Activated naive CD4-positive, alpha-beta T cell treated with anti-CD3 and anti-CD28 coated beads for 36 hours (primary cell): ENCODE measurements at regions of chr15 and their contacts with region 1.

Region 1: GRCh38 chr15:65286704-65287519 is at the start of gene PARP16:
- DNase-seq: peak; percentile 92
- H3K4me3 Mint-ChIP-seq: peak within 1 kb of the TSS; percentile 83
- H3K27ac Mint-ChIP-seq: peak within 1 kb of the TSS; percentile 82
- H3K4me1 Mint-ChIP-seq: peaks cover 32% of the 10 kb centered on the region
- H3K27me3 Mint-ChIP-seq: no peaks in the 10 kb centered on the region
- total RNA-seq, gene PARP16: 16.2 to 16.8 TPM

Region 2: GRCh38 chr15:65249641-65250040 is 37.3 kb before region 1 on chr15:
- CTCF ChIA-PET with region 1: interaction called, 5 read pairs
- intact Hi-C with region 1: loop called (anchors 1 kb)
- DNase-seq: peak; percentile 96
- H3K4me3 Mint-ChIP-seq: peak overlapping the region; percentile 4
- H3K27ac Mint-ChIP-seq: peak overlapping the region; percentile 78
- H3K4me1 Mint-ChIP-seq: peaks cover 24% of the 10 kb centered on the region
- H3K27me3 Mint-ChIP-seq: no peaks in the 10 kb centered on the region

Region 3: GRCh38 chr15:65268411-65268810 is 18.5 kb before region 1 on chr15:
- CTCF ChIA-PET with region 1: interaction called, 27 read pairs
- intact Hi-C with region 1: no loop called
- DNase-seq: no peak
- H3K4me3 Mint-ChIP-seq: no peak overlapping the region
- H3K27ac Mint-ChIP-seq: no peak overlapping the region
- H3K4me1 Mint-ChIP-seq: no peaks in the 10 kb centered on the region
- H3K27me3 Mint-ChIP-seq: no peaks in the 10 kb centered on the region

Region 4: DNA sequence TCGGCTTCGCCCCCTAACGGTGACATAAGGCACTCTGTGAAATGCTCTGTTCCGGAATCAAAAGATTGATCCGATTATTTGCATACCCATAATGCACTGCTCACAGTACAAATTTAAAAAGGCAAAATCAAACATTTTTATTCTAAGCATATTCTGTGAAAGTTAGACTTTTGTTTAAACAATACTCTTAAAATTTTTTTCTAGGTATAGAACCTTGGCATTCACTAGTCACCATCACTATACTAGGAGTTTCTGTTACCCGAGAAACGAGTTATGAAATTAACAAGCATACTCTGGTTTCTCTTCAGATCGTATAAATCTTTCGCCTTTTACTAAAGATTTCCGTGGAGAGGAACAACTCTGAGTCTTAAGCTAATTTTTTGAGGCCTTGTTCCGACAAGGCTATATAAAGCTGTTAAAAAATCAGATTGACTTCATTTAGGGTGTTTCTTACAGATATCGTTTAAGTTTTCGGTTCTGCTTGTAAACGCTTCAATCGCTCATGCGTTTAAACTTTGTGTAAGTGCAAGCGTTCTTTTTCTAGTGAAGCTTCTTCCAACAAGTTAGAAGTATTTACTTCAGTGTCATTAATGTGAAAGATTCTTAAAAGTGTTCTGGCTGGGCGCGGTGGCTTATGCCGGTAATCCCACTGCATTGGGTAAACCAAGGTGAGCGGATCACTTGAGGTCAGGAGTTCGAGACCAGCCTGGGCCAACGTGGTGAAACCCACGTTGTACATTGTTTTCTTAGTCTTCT is 17.7 kb after region 1 on chr15 and contains the start of gene RNU5B-1:
- CTCF ChIA-PET with region 1: interaction called, 4 read pairs
- intact Hi-C with region 1: loop called (anchors 1 kb)
- DNase-seq: peak; percentile 86
- H3K4me3 Mint-ChIP-seq: peak within 1 kb of the TSS; percentile 89
- H3K27ac Mint-ChIP-seq: peak within 1 kb of the TSS; percentile 97
- H3K4me1 Mint-ChIP-seq: peaks cover 24% of the 10 kb centered on the region
- H3K27me3 Mint-ChIP-seq: peaks cover 4% of the 10 kb centered on the region
- total RNA-seq, gene RNU5B-1: not detected

Region 5: DNA sequence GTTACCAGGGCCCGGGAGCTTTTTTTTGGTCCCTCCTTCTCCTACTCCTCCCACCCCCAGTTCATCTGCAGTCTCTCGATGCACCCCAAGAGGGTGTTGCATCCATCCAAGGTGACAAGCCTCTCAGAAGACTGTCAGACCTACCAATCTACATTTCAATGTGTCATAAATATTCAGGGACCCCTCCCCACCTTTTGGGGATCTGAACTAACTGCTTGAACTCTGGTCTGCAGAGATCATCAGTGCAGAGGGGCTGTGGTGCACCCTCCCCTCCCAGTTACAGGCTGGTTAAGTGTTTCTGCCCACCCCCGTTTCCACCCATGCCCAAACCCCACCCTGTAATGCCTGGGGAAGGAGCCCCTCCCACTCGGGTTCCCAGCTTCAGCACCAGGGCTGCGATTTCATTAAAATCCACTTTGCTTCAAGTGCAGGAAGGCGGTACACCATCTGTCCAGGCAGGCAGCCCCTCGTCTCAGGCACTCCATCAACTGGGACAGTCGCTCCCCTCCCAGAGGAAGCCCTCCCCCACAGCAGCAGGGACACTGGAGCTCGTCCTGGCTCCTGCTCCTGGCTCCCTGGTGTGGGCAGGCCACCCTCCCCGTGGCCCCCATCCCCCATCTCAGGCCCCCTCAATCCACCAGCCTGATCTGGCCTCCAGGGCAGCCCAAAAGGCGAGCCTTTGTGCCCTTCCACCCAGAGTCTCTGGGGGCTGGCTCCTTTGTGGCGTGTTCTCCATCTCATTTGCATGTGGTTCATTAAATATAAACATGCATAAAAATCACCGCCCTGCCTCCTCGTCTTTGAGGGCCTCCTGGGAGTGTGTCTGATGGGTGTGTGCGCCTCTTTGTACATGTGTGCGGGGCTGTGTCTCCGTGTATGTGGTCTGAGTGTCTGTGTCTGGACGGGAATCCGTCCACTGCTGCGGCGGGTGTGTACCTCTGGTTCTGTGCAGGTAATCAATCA is 49.9 kb after region 1 on chr15:
- CTCF ChIA-PET with region 1: no interaction called
- intact Hi-C with region 1: no loop called
- DNase-seq: no peak
- H3K4me3 Mint-ChIP-seq: no peak overlapping the region
- H3K27ac Mint-ChIP-seq: no peak overlapping the region
- H3K4me1 Mint-ChIP-seq: no peaks in the 10 kb centered on the region
- H3K27me3 Mint-ChIP-seq: peaks cover 3% of the 10 kb centered on the region

Region 6: DNA sequence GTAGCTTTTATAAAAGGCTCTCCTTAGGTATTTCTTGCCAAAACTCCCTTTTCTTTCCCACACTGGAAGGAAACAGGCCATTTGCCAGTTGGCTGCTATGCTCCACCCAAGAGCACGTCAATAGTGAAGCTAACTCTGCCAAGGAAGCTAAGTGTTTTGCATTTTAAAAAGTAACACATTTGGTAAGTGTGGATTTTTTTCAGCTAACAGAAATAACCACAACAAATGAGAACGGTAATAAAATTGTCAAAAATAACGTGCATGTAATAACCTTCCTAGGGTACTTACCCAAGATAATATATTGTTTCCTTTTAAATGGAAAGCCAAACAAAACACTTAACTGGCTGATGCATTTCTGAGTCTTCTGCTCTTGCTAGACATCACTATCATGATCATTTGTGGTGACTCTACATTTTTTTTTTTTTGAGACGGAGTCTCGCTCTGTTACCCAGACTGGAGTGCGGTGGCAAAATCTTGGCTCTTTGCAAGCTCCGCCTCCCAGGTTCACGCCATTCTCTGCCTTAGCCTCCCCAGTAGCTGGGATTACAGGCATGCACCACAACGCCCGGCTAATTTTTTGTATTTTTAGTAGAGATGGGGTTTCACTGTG is 226.0 kb after region 1 on chr15:
- CTCF ChIA-PET with region 1: no interaction called
- intact Hi-C with region 1: no loop called
- DNase-seq: no peak
- H3K4me3 Mint-ChIP-seq: no peak overlapping the region
- H3K27ac Mint-ChIP-seq: no peak overlapping the region
- H3K4me1 Mint-ChIP-seq: peaks cover 39% of the 10 kb centered on the region
- H3K27me3 Mint-ChIP-seq: no peaks in the 10 kb centered on the region

Region 7: DNA sequence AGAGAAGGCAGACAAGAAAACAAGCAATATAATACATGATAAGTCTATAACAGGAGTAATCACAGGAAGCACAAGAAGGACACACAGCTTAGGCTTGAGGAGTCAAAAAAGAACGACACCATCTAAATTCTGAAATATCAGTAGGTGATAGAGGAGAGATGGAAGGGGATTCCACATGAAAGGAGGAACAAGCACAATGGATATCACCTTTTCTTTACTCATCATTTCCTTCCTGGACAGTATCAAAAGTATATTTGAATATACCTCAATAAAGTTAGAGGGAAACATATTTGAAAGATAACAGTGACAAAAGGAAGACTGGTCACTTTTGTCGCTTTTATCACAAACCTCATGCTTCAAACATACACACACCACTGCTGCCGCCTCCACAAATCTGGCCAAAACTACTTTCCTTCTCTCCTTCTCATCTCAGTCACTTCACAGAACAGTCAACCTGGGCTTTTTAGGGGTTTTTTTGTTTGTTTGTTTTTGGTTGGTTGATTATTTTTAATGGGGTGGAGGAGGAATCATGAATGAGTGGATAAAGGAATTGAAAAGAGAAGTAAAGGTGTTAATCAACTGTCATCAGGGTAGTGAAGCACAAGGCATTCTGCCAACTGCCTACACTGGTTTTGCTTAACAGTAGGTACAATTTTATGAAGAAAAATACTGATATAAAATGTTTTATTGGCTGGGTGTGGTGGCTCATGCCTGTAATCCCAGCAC is 486.6 kb after region 1 on chr15:
- CTCF ChIA-PET with region 1: no interaction called
- intact Hi-C with region 1: no loop called
- DNase-seq: peak; percentile 35
- H3K4me3 Mint-ChIP-seq: no peak overlapping the region
- H3K27ac Mint-ChIP-seq: peak overlapping the region; percentile 42
- H3K4me1 Mint-ChIP-seq: peaks cover 40% of the 10 kb centered on the region
- H3K27me3 Mint-ChIP-seq: no peaks in the 10 kb centered on the region